B cell (primary cell): ENCODE measurements at regions of chr6 and their contacts with region 1.

Region 1: GRCh38 chr6:169831450-169832246 is 80.2 kb downstream of the ERMARD start:
- DNase-seq: peak; percentile 72
- ATAC-seq: no peak
- H3K4me3 ChIP-seq: no peak overlapping the region
- H3K4me3 Mint-ChIP-seq: no peak overlapping the region
- H3K27ac ChIP-seq: no peak overlapping the region
- H3K27ac Mint-ChIP-seq: no peak overlapping the region
- H3K4me1 ChIP-seq: peaks cover 0 to 6% of the 10 kb centered on the region in 2 donors
- H3K4me1 Mint-ChIP-seq: peaks cover 1% of the 10 kb centered on the region
- H3K27me3 ChIP-seq: peaks cover 0 to 12% (median 6%) of the 10 kb centered on the region in 4 experiments
- H3K27me3 Mint-ChIP-seq: peaks cover 28% of the 10 kb centered on the region
- CTCF ChIP-seq: peak; percentile 87

Region 2: DNA sequence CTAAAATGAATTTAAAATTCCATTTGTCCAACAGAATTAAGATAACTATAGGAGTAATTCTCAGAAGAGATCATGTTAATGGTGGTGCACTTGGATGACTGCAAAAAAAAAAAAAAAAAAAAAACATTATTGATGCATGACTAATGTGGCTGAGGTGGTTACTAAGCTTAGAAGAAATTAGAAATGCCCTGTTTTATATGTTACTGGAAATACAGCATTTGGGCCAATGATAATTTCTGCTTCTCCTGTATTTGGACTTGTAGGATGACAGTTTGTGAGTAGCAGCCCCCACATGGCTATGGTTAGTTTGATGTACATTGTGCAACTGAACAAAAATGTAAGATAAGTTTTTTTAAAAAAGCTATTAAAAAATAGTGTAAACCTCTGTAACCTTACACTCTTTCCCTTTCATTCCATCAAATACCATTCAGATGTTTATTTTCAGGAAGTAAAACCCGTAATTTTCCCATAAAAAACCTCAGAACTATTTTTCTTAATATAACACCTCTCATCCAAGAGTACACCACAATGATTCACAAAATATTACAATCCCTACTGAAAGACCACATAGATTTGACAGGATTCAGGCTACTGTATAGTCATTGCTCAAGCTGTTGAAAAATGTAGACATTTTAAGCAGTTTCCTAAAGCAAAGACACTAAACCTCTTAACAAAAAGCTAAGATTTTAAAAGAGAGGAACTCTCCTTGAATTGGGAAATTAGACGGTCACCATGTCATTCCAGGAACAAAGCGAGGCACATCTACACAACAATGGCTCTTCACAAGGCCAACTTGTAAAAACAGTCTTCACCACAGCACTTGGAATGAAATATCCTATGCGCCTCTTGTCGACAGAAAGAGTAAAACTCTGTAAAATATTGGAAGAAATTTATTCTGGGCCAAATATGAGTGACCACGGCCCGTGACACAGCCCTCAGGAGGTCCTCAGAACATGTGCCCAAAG is 212.8 kb before region 1 on chr6:
- CTCF ChIA-PET with region 1: no interaction called
- POLR2A ChIA-PET with region 1: no interaction called
- intact Hi-C with region 1: no loop called
- DNase-seq: no peak
- ATAC-seq: no peak
- H3K4me3 ChIP-seq: no peak overlapping the region
- H3K4me3 Mint-ChIP-seq: peak overlapping the region; percentile 7
- H3K27ac ChIP-seq: no peak overlapping the region
- H3K27ac Mint-ChIP-seq: no peak overlapping the region
- H3K4me1 ChIP-seq: peaks cover 12 to 20% of the 10 kb centered on the region in 2 donors
- H3K4me1 Mint-ChIP-seq: peaks cover 20% of the 10 kb centered on the region
- H3K27me3 ChIP-seq: no peaks in the 10 kb centered on the region
- H3K27me3 Mint-ChIP-seq: no peaks in the 10 kb centered on the region
- CTCF ChIP-seq: no peak

Region 3: DNA sequence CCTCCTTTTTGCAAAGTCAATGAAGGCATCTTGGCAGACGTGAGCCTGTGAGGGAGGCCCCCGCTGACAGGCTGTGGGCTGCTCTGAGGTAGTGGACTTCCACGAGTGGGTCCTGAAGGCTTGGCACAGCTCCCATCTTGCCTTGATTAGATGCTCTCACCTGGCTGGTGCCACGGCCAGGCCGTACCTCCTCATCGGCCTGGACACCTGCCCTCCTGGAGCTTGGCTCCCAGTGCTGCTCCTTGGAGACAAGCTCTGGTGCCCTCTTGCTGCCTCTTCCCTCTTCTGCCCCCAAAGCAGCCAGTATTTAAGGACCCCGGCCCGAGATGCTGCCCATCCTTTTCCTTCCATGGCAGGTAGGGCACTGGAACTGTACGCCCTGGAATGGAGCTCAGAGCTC is 13.3 kb after region 1 on chr6:
- CTCF ChIA-PET with region 1: interaction called, 13 read pairs
- POLR2A ChIA-PET with region 1: no interaction called
- intact Hi-C with region 1: no loop called
- DNase-seq: no peak
- ATAC-seq: no peak
- H3K4me3 ChIP-seq: no peak overlapping the region
- H3K4me3 Mint-ChIP-seq: no peak overlapping the region
- H3K27ac ChIP-seq: no peak overlapping the region
- H3K27ac Mint-ChIP-seq: no peak overlapping the region
- H3K4me1 ChIP-seq: no peaks in the 10 kb centered on the region
- H3K4me1 Mint-ChIP-seq: peaks cover 2% of the 10 kb centered on the region
- H3K27me3 ChIP-seq: no peaks in the 10 kb centered on the region
- H3K27me3 Mint-ChIP-seq: peaks cover 10% of the 10 kb centered on the region
- CTCF ChIP-seq: no peak

Region 4: DNA sequence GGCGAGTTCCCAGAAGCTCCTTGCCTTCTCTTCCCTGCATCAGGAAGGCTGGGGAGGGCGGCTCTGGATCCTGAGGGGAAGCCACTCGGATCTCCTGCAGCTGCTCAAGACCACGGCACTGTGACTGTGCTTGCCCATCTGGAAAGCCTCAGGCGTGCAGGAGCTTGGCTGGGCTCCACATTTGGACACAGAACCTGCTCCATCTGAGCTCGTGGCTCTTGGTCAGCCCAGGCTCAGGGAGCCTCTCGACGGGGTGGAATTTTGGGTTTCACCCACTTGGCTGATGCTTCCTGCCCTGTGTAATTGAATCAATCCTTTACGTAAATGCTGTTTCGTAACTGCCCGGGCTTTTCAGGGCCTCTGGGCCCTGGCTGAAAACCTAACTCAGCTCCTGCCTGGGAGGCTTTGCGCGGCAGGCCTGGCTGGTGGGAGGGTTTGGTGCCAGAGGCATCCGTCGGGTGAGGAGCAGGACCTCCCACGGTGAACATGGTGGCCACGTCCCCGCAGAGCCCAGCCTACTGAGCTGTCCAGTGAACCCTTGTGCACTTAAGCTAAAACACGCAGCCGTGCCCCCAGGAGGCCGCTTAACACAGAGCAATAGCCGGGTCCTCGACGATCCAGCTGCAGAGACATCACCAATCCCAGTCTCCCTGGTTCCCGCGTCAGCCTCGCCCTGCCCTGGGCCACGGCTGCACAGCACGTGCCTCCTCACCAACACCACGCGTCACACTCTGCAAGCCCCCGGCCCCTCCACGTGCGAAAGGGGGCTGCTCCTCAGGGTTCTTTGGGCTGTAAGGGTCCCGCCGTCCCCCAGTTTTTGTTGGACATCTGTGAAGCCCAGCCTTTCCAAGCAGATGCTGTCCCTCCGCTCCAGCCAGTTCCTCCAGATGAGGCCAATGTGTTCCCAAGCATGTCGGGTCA is 218.3 kb after region 1 on chr6:
- CTCF ChIA-PET with region 1: no interaction called
- POLR2A ChIA-PET with region 1: no interaction called
- intact Hi-C with region 1: no loop called
- DNase-seq: no peak
- ATAC-seq: no peak
- H3K4me3 ChIP-seq: no peak overlapping the region
- H3K4me3 Mint-ChIP-seq: no peak overlapping the region
- H3K27ac ChIP-seq: no peak overlapping the region
- H3K27ac Mint-ChIP-seq: no peak overlapping the region
- H3K4me1 ChIP-seq: no peaks in the 10 kb centered on the region
- H3K4me1 Mint-ChIP-seq: no peaks in the 10 kb centered on the region
- H3K27me3 ChIP-seq: no peaks in the 10 kb centered on the region
- H3K27me3 Mint-ChIP-seq: peaks cover 12% of the 10 kb centered on the region
- CTCF ChIP-seq: no peak